ENCODE measurements at regions of chr12 and their contacts with region 1.

Region 1: GRCh38 chr12:49740930-49741881 is at the start of gene TMBIM6:
- DNase-seq: peak; percentile 95
- CTCF ChIP-seq: peak; percentile 95

Region 2: GRCh38 chr12:49636979-49637755 is 104.0 kb before region 1 on chr12:
- CTCF ChIA-PET with region 1: interaction called, 10 read pairs
- POLR2A ChIA-PET with region 1: interaction called, 6 read pairs
- DNase-seq: peak; percentile 82
- CTCF ChIP-seq: peak; percentile 73

Region 3: GRCh38 chr12:49662998-49663843 is 78.0 kb before region 1 on chr12:
- CTCF ChIA-PET with region 1: interaction called, 14 read pairs
- POLR2A ChIA-PET with region 1: no interaction called
- DNase-seq: peak; percentile 87
- CTCF ChIP-seq: no peak

Region 4: GRCh38 chr12:49716553-49716952 is 24.7 kb before region 1 on chr12:
- CTCF ChIA-PET with region 1: interaction called, 19 read pairs
- POLR2A ChIA-PET with region 1: interaction called, 6 read pairs
- DNase-seq: peak; percentile 59
- CTCF ChIP-seq: no peak

Region 5: GRCh38 chr12:49776413-49776812 is 35.2 kb after region 1 on chr12:
- CTCF ChIA-PET with region 1: interaction called, 15 read pairs
- POLR2A ChIA-PET with region 1: interaction called, 3 read pairs
- DNase-seq: peak; percentile 78
- CTCF ChIP-seq: peak; percentile 79

Region 6: GRCh38 chr12:50016501-50017475 is 275.6 kb after region 1 on chr12:
- CTCF ChIA-PET with region 1: no interaction called
- POLR2A ChIA-PET with region 1: no interaction called
- DNase-seq: no peak
- CTCF ChIP-seq: no peak

Measured in GM10248 (cell line).